ENCODE measurements at regions of chr4 and their contacts with region 1.

Region 1: DNA sequence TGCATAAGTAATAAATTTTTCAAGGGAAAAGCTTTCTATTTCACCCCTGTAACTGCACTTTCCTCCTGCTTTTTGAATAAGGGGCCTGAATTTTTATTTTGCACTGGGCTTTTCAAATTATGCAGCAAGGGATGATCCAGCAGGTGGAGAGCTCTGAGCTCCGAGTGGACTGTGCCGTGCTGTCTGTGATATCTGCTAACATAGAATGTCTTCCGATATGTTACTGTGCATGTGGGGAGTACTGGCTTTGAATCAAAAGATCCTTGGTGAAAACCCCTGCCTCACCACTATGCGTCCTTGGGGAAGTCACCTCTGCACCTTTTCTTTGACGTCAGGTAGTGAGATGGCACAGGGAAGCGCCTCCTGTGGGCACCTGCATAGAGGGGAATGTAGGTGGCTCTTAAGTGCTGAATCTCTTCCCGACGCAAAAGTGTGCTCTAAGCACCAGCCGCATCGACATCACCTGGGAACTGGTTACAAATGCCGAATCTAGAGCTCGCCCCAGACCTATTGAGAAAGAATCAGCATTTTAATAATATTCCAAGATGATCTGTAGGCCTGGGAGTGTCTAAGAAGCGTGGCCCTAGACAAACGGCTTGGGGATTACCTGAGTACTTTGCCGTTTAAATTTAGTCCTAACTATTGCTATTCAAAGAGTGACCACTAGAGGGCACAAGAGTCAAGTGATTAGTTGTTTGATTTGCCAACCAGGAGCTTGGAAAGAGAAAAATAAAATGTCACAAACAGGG is 19.2 kb upstream of the WFS1 start:
- DNase-seq: peak; percentile 10
- ATAC-seq: peak; percentile 55
- H3K4me3 Mint-ChIP-seq: no peak overlapping the region
- H3K27ac Mint-ChIP-seq: no peak overlapping the region
- H3K4me1 Mint-ChIP-seq: no peaks in the 10 kb centered on the region
- H3K27me3 Mint-ChIP-seq: peaks cover 25% of the 10 kb centered on the region
- CTCF ChIP-seq: no peak

Region 2: GRCh38 chr4:5635826-5636195 is 614.6 kb before region 1 on chr4:
- CTCF ChIA-PET with region 1: no interaction called
- POLR2A ChIA-PET with region 1: no interaction called
- intact Hi-C with region 1: no loop called
- DNase-seq: no peak
- ATAC-seq: no peak
- H3K4me3 Mint-ChIP-seq: no peak overlapping the region
- H3K27ac Mint-ChIP-seq: no peak overlapping the region
- H3K4me1 Mint-ChIP-seq: no peaks in the 10 kb centered on the region
- H3K27me3 Mint-ChIP-seq: no peaks in the 10 kb centered on the region
- CTCF ChIP-seq: no peak

Region 3: GRCh38 chr4:5998333-5998936 is 252.0 kb before region 1 on chr4:
- CTCF ChIA-PET with region 1: interaction called, 10 read pairs
- POLR2A ChIA-PET with region 1: no interaction called
- intact Hi-C with region 1: no loop called
- DNase-seq: peak; percentile 62
- ATAC-seq: peak; percentile 65
- H3K4me3 Mint-ChIP-seq: no peak overlapping the region
- H3K27ac Mint-ChIP-seq: no peak overlapping the region
- H3K4me1 Mint-ChIP-seq: peaks cover 7% of the 10 kb centered on the region
- H3K27me3 Mint-ChIP-seq: peaks cover 2% of the 10 kb centered on the region
- CTCF ChIP-seq: peak; percentile 94

Region 4: GRCh38 chr4:6264225-6264540 is 13.8 kb after region 1 on chr4:
- CTCF ChIA-PET with region 1: interaction called, 40 read pairs
- POLR2A ChIA-PET with region 1: no interaction called
- intact Hi-C with region 1: no loop called
- DNase-seq: peak; percentile 58
- ATAC-seq: no peak
- H3K4me3 Mint-ChIP-seq: no peak overlapping the region
- H3K27ac Mint-ChIP-seq: no peak overlapping the region
- H3K4me1 Mint-ChIP-seq: peaks cover 9% of the 10 kb centered on the region
- H3K27me3 Mint-ChIP-seq: peaks cover 19% of the 10 kb centered on the region
- CTCF ChIP-seq: peak; percentile 16

Region 5: DNA sequence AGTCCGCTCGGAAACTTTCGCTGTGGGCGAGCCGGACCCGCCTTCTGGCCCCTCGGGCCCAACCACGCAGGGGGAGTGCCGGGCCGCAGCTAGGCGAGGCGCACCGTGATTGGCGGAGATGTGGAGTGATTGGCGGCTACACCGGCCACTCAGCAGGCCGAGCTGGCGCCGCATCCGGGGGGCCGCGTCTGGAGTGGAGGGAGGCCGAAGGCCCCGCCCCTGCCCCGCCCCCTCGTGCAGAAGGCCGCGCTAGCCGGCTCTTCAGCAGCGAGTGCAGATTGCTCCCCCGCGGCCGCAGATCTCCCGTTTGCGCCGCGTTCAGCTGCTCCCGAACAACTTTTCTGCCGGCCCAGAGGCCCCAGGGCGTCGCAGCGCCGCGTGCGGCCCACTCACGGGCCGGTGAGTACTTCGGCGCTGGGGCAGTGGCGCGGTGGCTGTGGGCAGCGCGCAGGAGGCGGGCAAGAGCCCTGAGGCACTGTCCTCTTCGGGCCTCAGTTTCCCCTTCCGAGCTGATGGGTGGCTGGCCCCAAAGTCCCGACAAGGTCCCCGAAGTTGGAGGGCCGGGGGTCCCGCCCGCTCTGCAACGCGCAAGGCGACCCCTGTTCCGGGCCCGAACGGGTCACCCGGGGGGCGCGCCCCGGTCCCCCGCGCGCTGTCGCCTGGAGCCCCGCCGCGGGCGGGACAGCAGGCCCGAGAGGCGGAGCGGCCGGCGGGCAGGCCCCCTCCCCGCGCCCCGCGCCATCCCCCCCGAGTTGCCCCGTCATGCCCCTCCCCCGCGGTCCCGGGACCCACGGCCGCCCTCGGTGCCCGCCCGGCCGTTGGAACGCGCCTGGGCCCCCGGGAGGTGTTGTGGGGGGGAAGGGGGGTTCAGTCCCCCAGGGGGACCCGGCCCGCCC is 19.5 kb after region 1 on chr4 and contains the start of gene WFS1:
- CTCF ChIA-PET with region 1: interaction called, 40 read pairs
- POLR2A ChIA-PET with region 1: interaction called, 4 read pairs
- intact Hi-C with region 1: no loop called
- DNase-seq: peak; percentile 97
- ATAC-seq: peak; percentile 100
- H3K4me3 Mint-ChIP-seq: peak within 1 kb of the TSS; percentile 74
- H3K27ac Mint-ChIP-seq: no peak within 1 kb of the TSS
- H3K4me1 Mint-ChIP-seq: peaks cover 18% of the 10 kb centered on the region
- H3K27me3 Mint-ChIP-seq: peaks cover 9% of the 10 kb centered on the region
- CTCF ChIP-seq: no peak
- total RNA-seq, gene WFS1: 1.8 to 2.8 TPM

Region 6: DNA sequence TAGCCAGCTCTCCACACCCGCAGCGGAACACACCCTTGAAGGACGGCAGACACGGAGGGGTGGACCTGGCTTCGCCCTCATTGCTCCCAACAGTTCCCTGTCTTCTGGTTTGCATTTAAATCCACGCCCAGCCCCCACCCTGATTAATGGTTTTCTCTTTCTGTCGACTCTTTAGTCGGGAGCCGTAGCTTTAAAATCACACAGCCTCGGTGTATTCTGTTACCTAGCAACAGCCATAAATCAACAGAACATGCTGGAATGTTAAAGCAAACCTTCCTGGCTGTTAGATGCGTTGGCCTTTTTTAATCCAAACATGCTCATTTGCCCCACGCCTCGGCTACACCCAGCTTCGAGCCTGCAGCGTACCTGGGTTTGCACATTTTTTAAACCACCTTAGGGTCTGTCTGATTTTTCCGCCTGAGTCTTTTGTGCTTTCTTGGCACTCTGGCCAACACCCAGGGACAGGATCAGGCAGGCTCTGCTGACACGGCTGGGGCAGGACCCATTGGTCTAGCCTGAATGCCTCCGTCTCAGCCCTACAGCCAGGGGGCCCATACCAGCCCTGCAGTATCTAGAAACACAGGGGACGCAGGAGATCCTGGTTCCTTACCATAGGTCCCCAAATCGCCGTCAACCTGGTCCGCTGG is 243.4 kb after region 1 on chr4:
- CTCF ChIA-PET with region 1: no interaction called
- POLR2A ChIA-PET with region 1: no interaction called
- intact Hi-C with region 1: no loop called
- DNase-seq: no peak
- ATAC-seq: no peak
- H3K4me3 Mint-ChIP-seq: no peak overlapping the region
- H3K27ac Mint-ChIP-seq: no peak overlapping the region
- H3K4me1 Mint-ChIP-seq: no peaks in the 10 kb centered on the region
- H3K27me3 Mint-ChIP-seq: peaks cover 18% of the 10 kb centered on the region
- CTCF ChIP-seq: no peak